Activated naive CD4-positive, alpha-beta T cell treated with anti-CD3 and anti-CD28 coated beads, Interleukin-2, amount 10 ng/mL, durations not matched to agents 7 days and 5 days (primary cell): ENCODE measurements at regions of chr1 and their contacts with region 1.

Region 1: GRCh38 chr1:145845514-145846161 is at the start of gene NUDT17:
- DNase-seq: peak; percentile 82
- H3K4me3 Mint-ChIP-seq: no peak within 1 kb of the TSS
- H3K27ac Mint-ChIP-seq: peak within 1 kb of the TSS; percentile 50
- H3K4me1 Mint-ChIP-seq: peaks cover 12% of the 10 kb centered on the region
- H3K27me3 Mint-ChIP-seq: no peaks in the 10 kb centered on the region

Region 2: GRCh38 chr1:145730900-145731299 is 114.7 kb before region 1 on chr1:
- CTCF ChIA-PET with region 1: no interaction called
- DNase-seq: no peak
- H3K4me3 Mint-ChIP-seq: no peak overlapping the region
- H3K27ac Mint-ChIP-seq: no peak overlapping the region
- H3K4me1 Mint-ChIP-seq: no peaks in the 10 kb centered on the region
- H3K27me3 Mint-ChIP-seq: no peaks in the 10 kb centered on the region

Region 3: GRCh38 chr1:145858894-145859490 is 13.4 kb after region 1 on chr1 and contains the start of gene PIAS3:
- CTCF ChIA-PET with region 1: interaction called, 121 read pairs
- DNase-seq: peak; percentile 91
- H3K4me3 Mint-ChIP-seq: peak within 1 kb of the TSS; percentile 89
- H3K27ac Mint-ChIP-seq: peak within 1 kb of the TSS; percentile 82
- H3K4me1 Mint-ChIP-seq: peaks cover 21% of the 10 kb centered on the region
- H3K27me3 Mint-ChIP-seq: peaks cover 22% of the 10 kb centered on the region

Region 4: GRCh38 chr1:145906954-145907753 is 61.5 kb after region 1 on chr1:
- CTCF ChIA-PET with region 1: interaction called, 112 read pairs
- DNase-seq: no peak
- H3K4me3 Mint-ChIP-seq: no peak overlapping the region
- H3K27ac Mint-ChIP-seq: no peak overlapping the region
- H3K4me1 Mint-ChIP-seq: peaks cover 6% of the 10 kb centered on the region
- H3K27me3 Mint-ChIP-seq: no peaks in the 10 kb centered on the region

Region 5: DNA sequence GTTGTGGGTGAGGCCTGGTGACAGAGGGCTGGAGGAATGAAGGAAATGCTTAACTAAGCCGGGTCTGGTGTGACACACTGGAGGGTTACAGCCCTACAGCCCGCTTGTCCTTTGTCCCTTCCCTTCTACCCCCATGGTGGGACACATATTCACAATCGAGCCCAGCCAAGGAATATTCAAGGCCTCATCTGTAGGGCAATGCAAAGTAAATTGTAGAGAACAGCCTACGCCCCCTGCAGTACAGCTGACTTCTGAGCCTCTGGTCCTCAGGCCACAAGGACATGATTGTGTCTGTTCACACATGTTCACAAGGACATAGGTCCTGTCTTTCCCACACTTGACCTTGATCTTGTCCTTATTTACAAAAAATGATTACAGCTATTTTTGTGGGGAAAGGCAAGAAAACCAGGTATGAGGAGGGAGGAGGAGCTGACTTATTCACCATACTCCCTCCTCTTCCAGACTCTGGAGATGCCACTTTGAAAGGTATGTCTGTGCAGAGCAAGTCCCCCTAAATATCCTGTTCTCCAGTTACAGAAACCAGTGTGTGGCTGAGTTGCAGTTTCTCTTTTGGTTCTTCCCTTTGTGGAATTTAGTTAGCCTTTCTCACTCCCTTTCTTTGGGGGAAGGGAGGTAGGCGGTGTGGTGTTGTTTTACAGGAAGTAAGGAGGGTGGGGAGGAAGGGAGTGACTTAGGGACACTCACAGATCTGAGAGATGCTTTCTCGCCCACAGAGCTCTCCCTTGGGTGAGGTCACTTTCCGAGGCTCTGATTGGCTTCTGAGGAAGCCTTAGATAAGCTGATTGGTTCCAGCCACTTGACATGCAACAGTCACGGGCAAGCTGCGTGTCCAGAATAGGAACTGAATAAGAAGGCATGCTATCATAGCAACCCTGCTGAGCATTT is 133.5 kb after region 1 on chr1:
- CTCF ChIA-PET with region 1: interaction called, 37 read pairs
- DNase-seq: peak; percentile 91
- H3K4me3 Mint-ChIP-seq: no peak overlapping the region
- H3K27ac Mint-ChIP-seq: no peak overlapping the region
- H3K4me1 Mint-ChIP-seq: peaks cover 12% of the 10 kb centered on the region
- H3K27me3 Mint-ChIP-seq: no peaks in the 10 kb centered on the region

Region 6: GRCh38 chr1:146020058-146021049 is 174.7 kb after region 1 on chr1:
- CTCF ChIA-PET with region 1: interaction called, 106 read pairs
- DNase-seq: no peak
- H3K4me3 Mint-ChIP-seq: no peak overlapping the region
- H3K27ac Mint-ChIP-seq: no peak overlapping the region
- H3K4me1 Mint-ChIP-seq: peaks cover 9% of the 10 kb centered on the region
- H3K27me3 Mint-ChIP-seq: peaks cover 87% of the 10 kb centered on the region